CD8-positive, alpha-beta T cell (primary cell): ENCODE measurements at regions of chr5 and their contacts with region 1.

Region 1: DNA sequence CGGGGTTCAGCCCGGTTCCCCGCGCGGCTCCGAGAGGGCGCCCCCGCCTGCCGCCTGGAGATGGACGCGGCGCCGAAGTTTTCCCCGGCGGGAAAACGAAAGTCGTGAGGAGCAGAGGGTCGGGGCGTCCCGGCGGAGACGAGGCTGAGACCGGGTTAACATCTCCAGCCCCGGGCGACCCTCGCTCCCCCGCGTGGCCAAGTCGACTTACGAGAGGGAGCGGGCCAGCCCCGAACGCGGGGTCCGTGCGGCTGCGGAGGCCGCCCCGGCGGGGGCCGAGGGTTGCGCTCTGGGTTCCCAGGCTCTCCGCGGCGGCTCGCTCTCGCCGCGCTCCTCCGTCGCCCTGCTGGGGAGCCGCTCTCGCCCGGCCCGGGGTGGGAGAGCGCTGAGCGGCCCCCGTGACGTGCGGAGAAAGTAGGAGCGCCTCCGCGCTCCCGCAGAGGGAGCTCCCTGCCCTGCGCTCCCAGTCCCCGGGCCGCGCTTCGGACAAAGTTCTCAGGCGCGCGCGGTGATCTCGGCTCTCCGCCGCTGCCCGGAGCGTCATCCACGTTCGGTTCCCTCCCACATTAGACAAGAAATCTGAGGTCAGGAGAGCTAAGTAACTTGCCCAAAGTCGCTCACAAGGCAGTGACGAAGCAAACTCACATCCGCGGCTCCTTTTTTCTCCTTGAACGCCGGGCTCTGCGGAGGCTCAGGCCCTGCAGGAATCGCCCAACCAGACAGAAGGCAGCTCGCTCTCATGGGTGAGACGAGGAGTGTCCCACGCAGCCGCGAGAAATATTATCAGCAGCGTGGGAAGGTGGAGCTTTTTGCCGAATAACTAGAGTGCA is 1.2 kb upstream of the GCNT4 start:
- DNase-seq: peak; percentile 35 to 79 (median 68)
- ATAC-seq: peak; percentile 45
- H3K4me3 ChIP-seq: peak overlapping the region; percentile 65 to 71
- H3K4me3 Mint-ChIP-seq: peak overlapping the region; percentile 93
- H3K27ac ChIP-seq: peak overlapping the region; percentile 75 to 82
- H3K27ac Mint-ChIP-seq: peak overlapping the region; percentile 98
- H3K4me1 ChIP-seq: peaks cover 73% of the 10 kb centered on the region
- H3K4me1 Mint-ChIP-seq: peaks cover 84% of the 10 kb centered on the region
- H3K27me3 ChIP-seq: peaks cover 0 to 4% of the 10 kb centered on the region in 2 experiments
- H3K27me3 Mint-ChIP-seq: no peaks in the 10 kb centered on the region
- CTCF ChIP-seq: peak; percentile 5

Region 2: GRCh38 chr5:74903165-74903787 is 150.2 kb before region 1 on chr5:
- CTCF ChIA-PET with region 1: no interaction called
- POLR2A ChIA-PET with region 1: no interaction called
- intact Hi-C with region 1: no loop called
- DNase-seq: peak in 4 of 9 experiments; percentile 19 to 44 (median 30)
- ATAC-seq: peak; percentile 61
- H3K4me3 ChIP-seq: no peak overlapping the region
- H3K4me3 Mint-ChIP-seq: no peak overlapping the region
- H3K27ac ChIP-seq: no peak overlapping the region
- H3K27ac Mint-ChIP-seq: no peak overlapping the region
- H3K4me1 ChIP-seq: no peaks in the 10 kb centered on the region
- H3K4me1 Mint-ChIP-seq: no peaks in the 10 kb centered on the region
- H3K27me3 ChIP-seq: no peaks in the 10 kb centered on the region
- H3K27me3 Mint-ChIP-seq: no peaks in the 10 kb centered on the region
- CTCF ChIP-seq: no peak

Region 3: DNA sequence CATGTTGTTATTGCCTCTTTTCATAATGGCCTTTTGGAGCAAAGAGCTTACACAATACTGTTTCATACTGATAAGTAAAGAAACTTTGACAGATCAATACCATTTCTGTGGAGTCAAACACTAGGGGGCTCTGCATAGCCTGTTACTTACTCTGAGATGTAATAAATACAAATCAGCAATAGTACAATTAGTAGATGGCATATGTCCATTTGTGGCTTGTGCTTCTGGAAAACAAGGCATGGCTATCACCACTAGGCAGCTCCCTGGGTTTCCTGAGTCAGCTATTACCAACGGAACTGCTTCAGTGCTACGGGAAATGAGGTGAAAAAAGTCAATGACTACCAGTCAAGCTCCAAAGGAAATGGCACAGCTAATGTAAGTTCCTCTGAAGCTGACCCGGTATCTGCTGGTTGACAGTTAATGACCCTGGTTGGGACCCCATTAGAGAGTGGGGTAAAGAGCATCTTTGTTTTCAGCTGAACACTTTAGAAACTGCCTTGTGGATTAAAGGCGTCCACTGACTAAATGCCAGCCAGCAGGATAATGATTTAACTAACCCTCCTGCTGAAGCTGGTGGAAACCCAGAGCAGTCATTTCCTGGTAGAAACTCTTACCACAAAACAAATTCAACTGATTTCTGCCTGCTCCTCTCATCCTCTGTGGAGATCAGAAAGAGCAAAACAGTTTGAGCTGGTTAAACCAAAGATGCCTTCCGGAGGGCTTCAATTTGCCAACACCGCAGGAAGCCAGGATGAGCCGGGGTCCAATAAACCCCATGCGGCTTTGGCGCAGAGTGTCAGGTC is 118.4 kb before region 1 on chr5:
- CTCF ChIA-PET with region 1: interaction called, 28 read pairs
- POLR2A ChIA-PET with region 1: interaction called, 9 read pairs
- intact Hi-C with region 1: loop called (anchors 5 kb)
- DNase-seq: peak in 7 of 9 experiments; percentile 7 to 60 (median 21)
- ATAC-seq: peak; percentile 71
- H3K4me3 ChIP-seq: peak overlapping the region; percentile 5 to 7
- H3K4me3 Mint-ChIP-seq: peak overlapping the region; percentile 73
- H3K27ac ChIP-seq: peak overlapping the region in 1 of 2 experiments; percentile 44
- H3K27ac Mint-ChIP-seq: peak overlapping the region; percentile 83
- H3K4me1 ChIP-seq: peaks cover 19% of the 10 kb centered on the region
- H3K4me1 Mint-ChIP-seq: peaks cover 26% of the 10 kb centered on the region
- H3K27me3 ChIP-seq: peaks cover 0 to 2% of the 10 kb centered on the region in 2 experiments
- H3K27me3 Mint-ChIP-seq: no peaks in the 10 kb centered on the region
- CTCF ChIP-seq: no peak

Region 4: DNA sequence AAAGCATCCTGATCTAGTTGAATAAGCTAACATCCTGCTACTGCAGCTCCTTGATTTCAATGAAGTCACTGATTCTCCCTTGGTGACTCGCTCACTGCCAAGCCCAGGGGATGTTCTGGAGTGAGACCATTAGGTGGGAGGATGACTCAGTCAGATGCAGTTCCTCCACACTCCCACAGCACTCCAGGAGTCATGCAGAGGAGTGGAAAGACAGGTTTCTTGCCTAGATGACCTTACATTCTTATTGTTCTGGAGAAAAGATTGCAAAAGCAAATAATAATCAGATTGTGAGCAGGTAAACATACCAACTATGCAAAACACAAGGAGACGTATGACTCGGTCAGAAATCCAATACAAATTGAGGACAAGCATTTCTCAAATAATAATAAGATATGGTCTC is 16.4 kb before region 1 on chr5:
- CTCF ChIA-PET with region 1: interaction called, 25 read pairs
- POLR2A ChIA-PET with region 1: interaction called, 9 read pairs
- intact Hi-C with region 1: loop called in 1 of 2 experiments (anchors 1 kb)
- DNase-seq: no peak
- ATAC-seq: no peak
- H3K4me3 ChIP-seq: no peak overlapping the region
- H3K4me3 Mint-ChIP-seq: no peak overlapping the region
- H3K27ac ChIP-seq: no peak overlapping the region
- H3K27ac Mint-ChIP-seq: peak overlapping the region; percentile 80
- H3K4me1 ChIP-seq: peaks cover 49% of the 10 kb centered on the region
- H3K4me1 Mint-ChIP-seq: peaks cover 79% of the 10 kb centered on the region
- H3K27me3 ChIP-seq: no peaks in the 10 kb centered on the region
- H3K27me3 Mint-ChIP-seq: no peaks in the 10 kb centered on the region
- CTCF ChIP-seq: no peak

Region 5: DNA sequence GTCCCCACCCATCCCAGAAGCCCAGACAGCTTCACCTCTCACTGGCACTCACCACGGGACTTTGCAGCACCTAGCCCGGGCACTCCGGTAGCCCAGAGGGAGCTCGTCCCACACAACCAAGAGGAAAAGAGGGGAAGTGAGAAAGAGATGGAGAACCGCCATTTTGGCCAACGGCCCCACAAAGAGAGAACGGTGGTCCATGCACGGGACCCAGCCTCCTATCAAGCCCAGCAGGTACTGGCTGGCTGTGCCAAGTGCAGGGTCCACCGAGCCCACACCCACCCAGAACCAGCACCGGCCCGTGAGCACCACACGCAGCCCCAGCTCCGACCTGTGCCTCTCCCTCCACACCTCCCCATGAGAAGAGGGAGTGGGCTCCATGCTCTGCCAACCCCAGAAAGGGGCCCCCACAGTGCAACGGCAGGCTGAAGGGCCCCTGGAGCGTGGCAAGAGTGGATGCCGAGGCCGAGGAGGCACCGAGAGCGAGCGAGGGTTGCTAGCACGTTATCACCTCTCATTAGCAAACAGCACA is 77.4 kb after region 1 on chr5:
- CTCF ChIA-PET with region 1: no interaction called
- POLR2A ChIA-PET with region 1: no interaction called
- intact Hi-C with region 1: no loop called
- DNase-seq: no peak
- ATAC-seq: no peak
- H3K4me3 ChIP-seq: no peak overlapping the region
- H3K4me3 Mint-ChIP-seq: no peak overlapping the region
- H3K27ac ChIP-seq: no peak overlapping the region
- H3K27ac Mint-ChIP-seq: no peak overlapping the region
- H3K4me1 ChIP-seq: no peaks in the 10 kb centered on the region
- H3K4me1 Mint-ChIP-seq: no peaks in the 10 kb centered on the region
- H3K27me3 ChIP-seq: no peaks in the 10 kb centered on the region
- H3K27me3 Mint-ChIP-seq: no peaks in the 10 kb centered on the region
- CTCF ChIP-seq: no peak

Region 6: DNA sequence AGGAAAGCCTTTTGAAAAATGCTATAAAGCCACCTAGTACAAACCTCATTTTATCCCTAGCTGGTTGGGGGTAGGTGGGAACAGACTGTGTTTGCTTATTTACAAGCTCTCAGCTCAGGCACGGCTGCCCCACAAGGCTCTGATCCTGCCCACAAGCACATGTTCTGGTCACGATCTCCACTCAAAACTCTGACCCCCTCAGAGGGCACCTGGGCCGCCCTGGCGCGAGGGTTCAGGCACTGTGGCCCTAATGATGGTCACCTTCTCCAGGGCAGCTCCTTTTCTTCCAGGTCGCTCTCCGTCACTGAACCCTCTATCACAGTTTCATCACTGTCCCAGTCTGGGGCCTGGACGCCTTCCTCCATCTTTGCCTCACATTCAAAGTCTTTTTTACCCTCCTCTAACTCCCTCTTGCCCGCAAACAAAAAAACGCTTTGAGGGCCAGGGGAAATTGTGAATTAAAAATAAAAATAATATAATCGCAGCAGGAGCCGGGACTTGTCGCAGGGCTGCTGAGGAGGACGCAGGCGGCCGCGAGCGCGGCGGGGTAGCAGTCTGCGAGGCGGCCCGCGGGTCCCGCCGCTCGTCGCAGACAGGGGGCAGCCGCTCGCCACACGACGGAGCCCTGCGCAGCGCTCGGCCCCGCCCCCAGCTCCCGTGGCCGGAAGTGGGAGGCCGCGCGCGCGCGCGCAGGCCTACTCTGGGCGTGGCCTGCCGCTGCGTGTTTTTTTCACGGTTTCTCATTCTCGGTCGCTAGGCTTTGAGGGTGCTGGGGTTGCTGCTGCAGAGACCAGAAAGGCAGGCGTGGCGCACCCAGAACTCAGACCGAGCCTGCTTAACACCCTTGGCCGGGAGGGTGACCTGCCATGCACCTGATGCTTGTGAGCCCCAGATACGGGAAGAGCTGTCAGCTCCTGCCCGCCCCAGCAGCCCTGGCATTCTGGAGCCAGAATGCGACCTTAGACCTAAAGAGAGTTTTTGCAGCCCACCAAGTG is 183.1 kb after region 1 on chr5 and contains the start of gene ANKRD31:
- CTCF ChIA-PET with region 1: interaction called, 69 read pairs
- POLR2A ChIA-PET with region 1: interaction called, 155 read pairs
- intact Hi-C with region 1: loop called (anchors 1 to 2 kb)
- DNase-seq: peak; percentile 81 to 95 (median 90)
- ATAC-seq: peak; percentile 98
- H3K4me3 ChIP-seq: peak within 1 kb of the TSS; percentile 65 to 91
- H3K4me3 Mint-ChIP-seq: peak within 1 kb of the TSS; percentile 94
- H3K27ac ChIP-seq: peak within 1 kb of the TSS; percentile 84 to 89
- H3K27ac Mint-ChIP-seq: peak within 1 kb of the TSS; percentile 99
- H3K4me1 ChIP-seq: peaks cover 15% of the 10 kb centered on the region
- H3K4me1 Mint-ChIP-seq: peaks cover 25% of the 10 kb centered on the region
- H3K27me3 ChIP-seq: no peaks in the 10 kb centered on the region
- H3K27me3 Mint-ChIP-seq: no peaks in the 10 kb centered on the region
- CTCF ChIP-seq: peak; percentile 89
- total RNA-seq, gene ANKRD31: 0.84 to 0.89 TPM

Region 7: DNA sequence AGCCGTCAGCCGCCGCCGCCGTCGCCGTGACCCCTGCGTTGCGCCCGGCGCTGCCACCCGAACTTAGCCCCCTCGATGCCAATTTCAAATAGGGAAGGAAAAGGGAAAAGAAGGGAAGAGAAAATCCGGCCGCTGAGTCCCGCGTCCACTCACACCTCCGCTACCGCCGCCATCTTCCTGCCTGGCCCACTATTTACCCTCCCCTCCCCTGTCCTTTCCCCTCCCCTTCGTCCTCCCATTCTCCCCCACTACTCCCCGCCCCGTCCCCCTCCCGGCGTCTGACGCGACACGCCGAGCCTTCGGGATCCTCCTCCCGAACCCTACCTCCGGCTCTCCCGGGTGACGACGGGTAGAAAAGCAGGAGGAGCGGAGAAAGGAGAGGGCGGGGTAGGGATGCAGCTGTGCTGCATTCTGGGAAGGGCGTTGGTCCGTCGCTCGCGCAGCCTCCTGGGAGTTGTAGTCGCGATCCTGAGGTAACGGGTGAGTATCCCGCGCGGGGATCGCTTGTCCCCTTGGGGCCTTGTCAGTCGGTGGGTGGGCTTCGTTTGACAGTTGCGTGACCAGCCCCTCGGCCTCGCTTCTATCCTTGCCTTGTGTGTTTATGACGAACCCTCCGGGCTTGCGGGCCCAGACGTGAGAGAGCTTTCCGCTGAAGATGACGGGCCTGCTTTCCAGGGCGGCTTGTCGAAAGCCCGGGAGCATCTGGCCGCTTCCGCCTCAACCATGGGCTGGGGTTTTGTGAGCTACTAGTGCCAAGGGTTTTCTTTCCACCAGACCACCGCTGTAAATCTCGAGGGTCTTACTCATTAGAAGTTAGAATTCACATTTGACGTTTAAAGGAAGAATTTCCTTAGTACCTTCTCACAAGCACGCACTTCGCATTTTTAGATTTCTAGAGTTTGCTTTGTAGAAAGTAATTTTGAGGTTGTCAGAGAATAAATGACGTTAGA is 458.2 kb after region 1 on chr5 and contains the starts of genes CERT1 and POLK:
- CTCF ChIA-PET with region 1: no interaction called
- POLR2A ChIA-PET with region 1: no interaction called
- intact Hi-C with region 1: loop called (anchors 10 kb)
- DNase-seq: peak; percentile 78 to 97 (median 89)
- ATAC-seq: peak; percentile 87
- H3K4me3 ChIP-seq: peak within 1 kb of the TSS; percentile 72 to 79
- H3K4me3 Mint-ChIP-seq: peak within 1 kb of the TSS; percentile 96
- H3K27ac ChIP-seq: peak within 1 kb of the TSS; percentile 74 to 78
- H3K27ac Mint-ChIP-seq: peak within 1 kb of the TSS; percentile 97
- H3K4me1 ChIP-seq: peaks cover 29% of the 10 kb centered on the region
- H3K4me1 Mint-ChIP-seq: peaks cover 64% of the 10 kb centered on the region
- H3K27me3 ChIP-seq: no peaks in the 10 kb centered on the region
- H3K27me3 Mint-ChIP-seq: no peaks in the 10 kb centered on the region
- CTCF ChIP-seq: no peak
- total RNA-seq, gene CERT1: 29.2 to 36.4 TPM
- total RNA-seq, gene POLK: 6.9 to 10.0 TPM

Region 8: GRCh38 chr5:75717082-75717922 is 663.8 kb after region 1 on chr5 and contains the start of gene POC5:
- CTCF ChIA-PET with region 1: no interaction called
- POLR2A ChIA-PET with region 1: no interaction called
- intact Hi-C with region 1: loop called in 1 of 2 experiments (anchors 10 kb)
- DNase-seq: peak; percentile 96 to 99 (median 98)
- ATAC-seq: peak; percentile 95
- H3K4me3 ChIP-seq: peak within 1 kb of the TSS; percentile 82 to 93
- H3K4me3 Mint-ChIP-seq: peak within 1 kb of the TSS; percentile 100
- H3K27ac ChIP-seq: peak within 1 kb of the TSS; percentile 69 to 88
- H3K27ac Mint-ChIP-seq: peak within 1 kb of the TSS; percentile 98
- H3K4me1 ChIP-seq: peaks cover 11% of the 10 kb centered on the region
- H3K4me1 Mint-ChIP-seq: peaks cover 39% of the 10 kb centered on the region
- H3K27me3 ChIP-seq: no peaks in the 10 kb centered on the region
- H3K27me3 Mint-ChIP-seq: no peaks in the 10 kb centered on the region
- CTCF ChIP-seq: no peak
- total RNA-seq, gene POC5: 6.5 to 7.9 TPM

Region 9: DNA sequence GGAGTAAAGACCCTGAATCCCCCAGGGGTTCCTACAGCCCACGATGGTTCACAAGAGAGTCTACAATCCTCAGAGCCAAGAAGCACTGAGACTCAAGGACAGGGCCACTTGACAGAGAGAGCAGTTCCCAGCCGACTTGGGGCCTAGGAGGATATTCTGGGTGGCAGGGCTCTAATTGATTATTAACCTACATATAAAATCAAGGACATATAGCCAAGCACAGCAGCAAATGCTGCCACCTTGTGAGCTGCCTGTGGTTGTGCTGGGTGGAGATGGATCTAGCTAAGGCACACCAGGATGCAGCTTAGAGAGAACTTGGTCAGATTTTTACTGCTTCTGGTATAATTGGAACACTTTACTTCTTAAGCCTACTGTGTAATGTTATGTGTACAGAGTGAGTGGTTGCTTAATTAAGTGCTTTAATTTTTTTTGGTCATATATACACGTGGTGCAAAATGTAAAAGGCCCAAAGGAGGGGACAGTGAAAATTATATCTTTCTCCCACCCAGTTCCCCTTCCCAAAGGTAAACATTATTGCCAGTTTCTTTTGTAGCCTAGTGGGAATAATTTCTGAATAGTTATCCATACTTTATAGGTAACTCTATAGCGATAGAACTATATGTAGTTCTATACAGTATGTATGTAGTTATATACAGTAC is 1490.9 kb after region 1 on chr5:
- CTCF ChIA-PET with region 1: no interaction called
- POLR2A ChIA-PET with region 1: no interaction called
- intact Hi-C with region 1: loop called in 1 of 2 experiments (anchors 10 kb)
- DNase-seq: peak; percentile 25 to 80 (median 53)
- ATAC-seq: peak; percentile 10
- H3K4me3 ChIP-seq: peak overlapping the region in 1 of 2 experiments; percentile 2
- H3K4me3 Mint-ChIP-seq: peak overlapping the region; percentile 77
- H3K27ac ChIP-seq: peak overlapping the region; percentile 77 to 91
- H3K27ac Mint-ChIP-seq: peak overlapping the region; percentile 97
- H3K4me1 ChIP-seq: peaks cover 68% of the 10 kb centered on the region
- H3K4me1 Mint-ChIP-seq: peaks cover 87% of the 10 kb centered on the region
- H3K27me3 ChIP-seq: no peaks in the 10 kb centered on the region
- H3K27me3 Mint-ChIP-seq: no peaks in the 10 kb centered on the region
- CTCF ChIP-seq: peak; percentile 66